Endothelial cell of umbilical vein (primary cell): ENCODE measurements at regions of chr17 and their contacts with region 1.

Region 1: GRCh38 chr17:56977673-56978395 is at the start of gene SCPEP1:
- DNase-seq: peak; percentile 85
- H3K4me3 ChIP-seq: peak within 1 kb of the TSS; percentile 64 to 85 (median 74)
- H3K27ac ChIP-seq: no peak within 1 kb of the TSS
- H3K4me1 ChIP-seq: peaks cover 14% of the 10 kb centered on the region
- H3K27me3 ChIP-seq: peaks cover 0 to 4% of the 10 kb centered on the region in 2 experiments
- CTCF ChIP-seq: no peak
- POLR2A ChIP-seq: no peak
- total RNA-seq, gene SCPEP1: 38.6 and 49.4 TPM in 2 replicates

Region 2: DNA sequence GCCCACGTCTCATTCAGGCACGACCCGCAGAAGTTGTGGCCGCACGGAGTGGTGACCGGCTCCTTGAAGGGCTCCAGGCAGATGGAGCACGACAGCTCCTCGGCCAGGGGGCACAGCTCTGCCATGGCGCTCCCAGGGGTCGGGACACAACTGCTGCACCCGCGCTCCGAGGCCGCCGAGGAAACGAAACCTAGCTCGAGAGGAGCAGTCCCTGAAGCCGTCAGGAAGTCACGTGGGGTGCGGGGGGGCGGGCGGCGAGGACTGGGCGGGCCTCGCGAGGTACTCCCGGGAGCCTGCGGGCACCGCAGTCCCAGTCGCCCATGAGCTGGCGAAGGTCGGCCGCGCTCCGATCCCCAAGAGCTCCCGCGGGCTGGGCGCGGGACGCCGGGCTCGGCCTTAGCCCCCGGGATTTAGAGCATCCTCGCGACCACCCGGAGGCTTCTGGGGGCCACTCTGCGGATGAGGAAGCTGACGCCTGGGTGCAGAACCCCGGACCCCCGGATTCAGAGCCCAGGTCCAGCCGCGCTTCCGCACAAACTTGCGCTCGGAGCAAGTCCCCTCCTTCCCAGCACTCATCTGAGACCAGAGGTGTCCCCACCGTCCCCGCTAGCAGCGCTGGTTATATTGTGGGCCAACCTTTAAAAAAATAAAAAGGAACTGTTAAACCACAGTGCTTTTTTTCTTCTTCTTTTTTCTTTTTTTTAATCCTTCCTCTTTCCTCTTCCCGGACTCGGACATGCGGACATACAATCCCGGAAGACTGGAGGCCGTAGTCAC is 63.8 kb before region 1 on chr17 and contains the start of gene TRIM25:
- CTCF ChIA-PET with region 1: no interaction called
- POLR2A ChIA-PET with region 1: interaction called, 10 read pairs
- dilution Hi-C with region 1: no loop called
- intact Hi-C with region 1: no loop called
- DNase-seq: peak; percentile 90
- H3K4me3 ChIP-seq: peak within 1 kb of the TSS; percentile 79 to 95 (median 88)
- H3K27ac ChIP-seq: peak within 1 kb of the TSS; percentile 93
- H3K4me1 ChIP-seq: peaks cover 33% of the 10 kb centered on the region
- H3K27me3 ChIP-seq: no peaks in the 10 kb centered on the region
- CTCF ChIP-seq: no peak
- POLR2A ChIP-seq: peak; percentile 100
- total RNA-seq, gene TRIM25: 69.4 and 98.4 TPM in 2 replicates

Region 3: GRCh38 chr17:56966338-56966737 is 11.5 kb before region 1 on chr17:
- CTCF ChIA-PET with region 1: interaction called, 13 read pairs
- POLR2A ChIA-PET with region 1: no interaction called
- dilution Hi-C with region 1: no loop called
- intact Hi-C with region 1: loop called (anchors 1 kb)
- DNase-seq: no peak
- H3K4me3 ChIP-seq: no peak overlapping the region
- H3K27ac ChIP-seq: no peak overlapping the region
- H3K4me1 ChIP-seq: no peaks in the 10 kb centered on the region
- H3K27me3 ChIP-seq: no peaks in the 10 kb centered on the region
- CTCF ChIP-seq: no peak
- POLR2A ChIP-seq: no peak

Region 4: GRCh38 chr17:57009737-57010445 is 32.1 kb after region 1 on chr17:
- CTCF ChIA-PET with region 1: interaction called, 3 read pairs
- POLR2A ChIA-PET with region 1: no interaction called
- dilution Hi-C with region 1: no loop called
- intact Hi-C with region 1: loop called (anchors 2 kb)
- DNase-seq: peak; percentile 73
- H3K4me3 ChIP-seq: no peak overlapping the region
- H3K27ac ChIP-seq: no peak overlapping the region
- H3K4me1 ChIP-seq: peaks cover 4% of the 10 kb centered on the region
- H3K27me3 ChIP-seq: peaks cover 3 to 6% of the 10 kb centered on the region in 2 experiments
- CTCF ChIP-seq: peak; percentile 66 to 73
- POLR2A ChIP-seq: no peak

Region 5: GRCh38 chr17:57084802-57085447 is 107.1 kb after region 1 on chr17 and contains the start of gene AKAP1:
- CTCF ChIA-PET with region 1: no interaction called
- POLR2A ChIA-PET with region 1: no interaction called
- dilution Hi-C with region 1: no loop called
- intact Hi-C with region 1: loop called (anchors 5 kb)
- DNase-seq: peak; percentile 95
- H3K4me3 ChIP-seq: peak within 1 kb of the TSS; percentile 45 to 99 (median 68)
- H3K27ac ChIP-seq: peak within 1 kb of the TSS; percentile 88
- H3K4me1 ChIP-seq: peaks cover 8% of the 10 kb centered on the region
- H3K27me3 ChIP-seq: peaks cover 0 to 1% of the 10 kb centered on the region in 2 experiments
- CTCF ChIP-seq: peak in 1 of 2 donors; percentile 29
- POLR2A ChIP-seq: peak; percentile 95
- total RNA-seq, gene AKAP1: 20.9 and 23.9 TPM in 2 replicates

Region 6: GRCh38 chr17:57357399-57357807 is 379.6 kb after region 1 on chr17:
- CTCF ChIA-PET with region 1: no interaction called
- POLR2A ChIA-PET with region 1: no interaction called
- dilution Hi-C with region 1: no loop called
- intact Hi-C with region 1: no loop called
- DNase-seq: no peak
- H3K4me3 ChIP-seq: peak overlapping the region in 1 of 3 experiments; percentile 35
- H3K27ac ChIP-seq: no peak overlapping the region
- H3K4me1 ChIP-seq: peaks cover 5% of the 10 kb centered on the region
- H3K27me3 ChIP-seq: no peaks in the 10 kb centered on the region
- CTCF ChIP-seq: no peak
- POLR2A ChIP-seq: no peak